ENCODE measurements at regions of chr5 and their contacts with region 1.

Region 1: DNA sequence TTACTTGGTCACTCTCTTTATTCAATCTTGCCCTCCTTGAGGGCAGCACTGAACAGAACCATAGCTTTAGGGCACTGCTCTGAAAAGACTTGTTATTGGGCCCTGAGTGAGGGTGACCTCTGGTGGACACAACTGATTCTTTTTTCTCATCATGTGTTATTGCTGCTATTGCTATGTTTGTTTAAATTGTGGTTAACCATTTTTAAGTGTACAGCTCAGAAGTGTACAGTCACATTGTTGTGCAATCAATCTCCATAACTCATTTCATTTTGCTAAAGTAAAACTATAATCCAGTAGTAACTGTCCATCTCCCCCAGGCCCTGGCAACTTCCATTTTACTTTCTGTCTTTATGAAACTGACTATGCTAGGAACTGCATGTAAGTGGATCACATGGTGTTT is 351.1 kb upstream of the RIOK2 start:
- DNase-seq: no peak
- H3K4me3 ChIP-seq: no peak overlapping the region
- H3K27ac ChIP-seq: no peak overlapping the region
- H3K4me1 ChIP-seq: no peaks in the 10 kb centered on the region
- H3K27me3 ChIP-seq: no peaks in the 10 kb centered on the region
- CTCF ChIP-seq: peak; percentile 35 to 49 (median 38)

Region 2: DNA sequence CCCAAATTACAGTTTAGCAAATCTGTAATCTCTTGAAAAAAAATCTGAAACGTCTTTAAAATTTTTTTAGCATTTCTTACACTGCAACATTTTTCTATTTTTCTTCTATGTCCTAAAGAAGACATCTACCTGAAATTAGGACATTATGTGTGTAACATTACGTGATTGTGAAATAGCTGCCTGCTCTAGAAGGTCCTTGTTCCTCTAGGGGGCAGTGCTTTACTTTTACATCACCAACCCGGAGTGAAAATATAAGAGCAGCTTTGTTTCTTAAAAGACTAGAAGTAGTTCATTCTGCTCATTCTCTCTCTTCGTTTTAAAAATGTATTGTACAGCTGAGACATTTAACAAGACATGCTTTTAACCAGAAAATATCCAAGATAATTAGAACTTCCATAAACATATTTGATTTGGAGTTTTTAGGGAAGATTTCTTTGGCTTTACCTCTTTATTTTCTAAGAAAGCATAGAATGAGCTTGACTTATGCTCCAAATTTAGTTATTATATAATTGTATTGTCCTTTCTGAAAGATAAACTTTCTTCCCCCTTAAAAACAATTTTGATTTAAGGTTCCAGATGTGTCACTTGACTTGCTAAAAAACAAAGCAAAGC is 303.0 kb before region 1 on chr5:
- intact Hi-C with region 1: loop called (anchors 2 kb)
- DNase-seq: no peak
- H3K4me3 ChIP-seq: peak overlapping the region in 1 of 2 donors; percentile 28
- H3K27ac ChIP-seq: no peak overlapping the region
- H3K4me1 ChIP-seq: no peaks in the 10 kb centered on the region
- H3K27me3 ChIP-seq: no peaks in the 10 kb centered on the region
- CTCF ChIP-seq: peak; percentile 12 to 74 (median 65)

Region 3: DNA sequence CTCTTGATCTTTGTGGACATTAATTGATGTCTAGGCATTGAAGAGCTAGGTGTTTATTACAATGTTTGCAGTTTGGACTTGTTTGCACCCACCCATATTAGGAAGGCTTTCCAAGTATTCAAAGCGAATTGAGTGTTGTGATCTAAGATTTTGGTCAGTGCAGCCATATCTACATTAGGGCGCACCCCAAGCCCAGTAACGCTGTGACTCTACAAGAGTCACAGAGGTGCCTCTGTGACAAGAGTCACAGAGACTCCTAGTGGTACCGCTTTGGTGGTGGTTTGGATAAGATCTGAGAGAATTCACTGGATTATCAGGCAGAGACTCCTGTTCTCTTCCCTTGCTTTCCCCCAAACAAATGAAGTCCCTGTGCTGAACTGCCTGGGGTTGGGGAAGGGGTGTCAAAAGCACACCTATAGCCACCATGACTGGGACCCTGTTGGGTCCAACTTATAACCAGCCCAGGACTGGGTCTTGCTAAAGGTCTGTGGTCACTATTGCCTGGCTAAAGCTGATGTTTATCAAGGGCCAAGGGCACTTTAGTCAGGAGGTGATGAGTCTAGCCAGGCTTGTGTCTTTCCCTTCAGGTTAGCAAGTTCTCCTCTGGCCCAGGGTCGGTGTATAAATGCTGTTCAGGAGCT is 237.0 kb before region 1 on chr5:
- intact Hi-C with region 1: loop called (anchors 10 kb)
- DNase-seq: no peak
- H3K4me3 ChIP-seq: no peak overlapping the region
- H3K27ac ChIP-seq: no peak overlapping the region
- H3K4me1 ChIP-seq: no peaks in the 10 kb centered on the region
- H3K27me3 ChIP-seq: no peaks in the 10 kb centered on the region
- CTCF ChIP-seq: peak in 2 of 3 experiments; percentile 15 to 36

Region 4: DNA sequence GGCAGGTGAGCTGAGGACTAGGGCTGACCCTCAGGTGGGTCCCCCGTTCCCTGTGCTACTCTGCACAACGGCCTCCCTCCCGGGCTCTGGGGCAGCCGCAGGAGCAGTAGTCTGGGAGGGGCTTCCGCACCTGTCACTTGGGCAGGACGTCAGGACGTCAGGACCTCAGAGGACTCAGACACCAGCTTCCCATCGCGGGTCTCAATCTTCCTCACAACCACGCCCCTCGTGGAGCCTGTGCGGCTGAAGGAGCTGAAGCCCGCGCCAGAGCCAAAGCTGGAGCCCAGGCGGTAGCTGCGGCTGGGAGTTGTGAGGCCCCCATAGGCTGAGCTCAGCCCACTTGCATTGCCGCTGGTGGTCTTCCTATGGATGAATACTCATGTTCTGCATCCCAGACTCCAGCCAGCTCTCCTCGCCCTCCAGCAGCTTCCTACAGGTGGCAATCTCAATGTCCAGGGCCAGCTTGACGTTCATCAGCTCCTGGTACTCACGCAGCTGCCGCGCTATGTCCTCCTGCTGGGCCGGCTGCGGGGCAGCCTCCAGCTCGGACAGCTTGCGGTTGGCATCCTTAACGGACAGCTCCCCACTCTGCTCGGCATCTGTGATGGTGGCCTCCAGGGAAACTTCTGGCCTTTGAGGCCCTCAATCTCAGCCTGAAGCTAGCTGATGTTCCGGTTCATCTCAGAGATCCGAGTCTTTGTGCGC is 857.9 kb after region 1 on chr5:
- intact Hi-C with region 1: no loop called
- DNase-seq: no peak
- H3K4me3 ChIP-seq: no peak overlapping the region
- H3K27ac ChIP-seq: no peak overlapping the region
- H3K4me1 ChIP-seq: no peaks in the 10 kb centered on the region
- H3K27me3 ChIP-seq: no peaks in the 10 kb centered on the region
- CTCF ChIP-seq: no peak

Measured in ascending aorta (tissue), 2 donors.